PC-3 (cell line): ENCODE measurements at regions of chr5 and their contacts with region 1.

Region 1: DNA sequence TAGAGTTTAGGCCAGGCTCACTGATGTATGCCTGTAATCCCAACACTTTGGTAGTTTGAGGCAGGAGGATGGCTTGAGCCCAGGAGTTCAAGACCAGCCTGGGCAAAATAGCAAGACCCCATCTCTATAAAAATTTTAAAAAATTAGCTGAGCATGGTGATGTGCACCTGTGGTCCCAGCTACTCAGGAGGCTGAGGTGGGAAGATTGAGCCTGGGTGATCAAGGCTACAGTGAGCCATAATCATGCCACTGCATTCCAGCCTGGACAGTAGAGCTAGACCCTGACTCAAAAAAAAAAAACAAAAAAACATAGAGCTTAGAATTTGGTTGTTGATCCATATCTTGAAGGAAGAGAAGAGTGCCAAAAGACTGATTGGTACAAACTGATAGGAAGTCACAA is 14.7 kb upstream of the CDK7 start:
- DNase-seq: no peak
- ATAC-seq: no peak
- H3K4me3 ChIP-seq: no peak overlapping the region
- H3K27ac ChIP-seq: no peak overlapping the region
- H3K4me1 ChIP-seq: peaks cover 7% of the 10 kb centered on the region; the same call in 1 of the 2 replicates
- H3K27me3 ChIP-seq: no peaks in the 10 kb centered on the region
- CTCF ChIP-seq: no peak

Region 2: DNA sequence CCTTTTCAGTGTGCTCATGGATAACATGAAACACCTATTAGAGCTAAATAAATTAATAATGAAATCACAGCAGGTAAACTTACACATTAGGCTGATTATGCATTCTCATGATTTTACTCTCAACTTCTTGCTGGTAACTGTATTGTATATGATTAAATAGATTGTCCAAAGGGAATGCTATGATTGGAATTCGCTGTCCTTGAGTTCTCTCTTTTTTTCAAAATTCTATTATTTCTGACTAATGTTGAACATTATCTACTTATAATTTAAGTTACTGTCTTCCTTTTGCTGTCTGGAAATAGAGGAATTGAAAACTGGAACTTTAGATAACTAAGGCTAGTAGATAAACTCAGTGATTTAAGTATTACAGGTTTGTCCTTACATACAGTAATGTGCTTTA is 17.4 kb before region 1 on chr5:
- CTCF ChIA-PET with region 1: interaction called, 11 read pairs
- POLR2A ChIA-PET with region 1: no interaction called
- intact Hi-C with region 1: no loop called
- DNase-seq: no peak
- ATAC-seq: no peak
- H3K4me3 ChIP-seq: no peak overlapping the region
- H3K27ac ChIP-seq: no peak overlapping the region
- H3K4me1 ChIP-seq: peaks cover 9% of the 10 kb centered on the region
- H3K27me3 ChIP-seq: no peaks in the 10 kb centered on the region
- CTCF ChIP-seq: no peak